B cell (primary cell): ENCODE measurements at regions of chr2 and their contacts with region 1.

Region 1: DNA sequence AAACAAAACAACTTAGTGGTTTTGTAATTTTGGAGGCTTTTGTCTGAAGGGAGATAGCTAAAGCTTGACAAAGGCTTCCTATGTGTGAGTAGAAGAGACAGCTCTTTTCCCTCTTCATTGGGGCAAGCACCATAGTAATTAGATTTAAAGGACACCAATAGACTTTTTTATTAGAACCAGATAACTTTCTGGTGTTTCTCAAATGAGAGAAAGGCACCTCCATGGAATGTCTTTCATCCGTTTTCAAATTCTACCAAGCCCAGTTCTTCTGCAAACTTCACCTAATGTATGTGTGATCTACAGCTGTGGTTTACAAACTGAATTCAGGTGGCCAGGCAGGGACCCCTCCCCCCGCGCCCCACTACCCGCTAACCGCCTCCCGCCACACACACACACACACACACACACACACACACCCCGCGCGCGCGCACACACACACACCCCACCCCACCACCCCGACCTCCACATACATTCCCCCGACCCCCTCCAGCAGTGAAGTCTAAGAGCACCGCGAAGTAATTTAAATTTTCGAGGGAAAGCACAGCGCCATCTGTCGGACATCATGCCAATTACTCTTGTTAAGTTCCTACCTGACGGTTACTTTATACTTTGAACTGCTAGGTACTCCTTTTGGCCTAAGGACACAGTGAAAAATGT is 31.6 kb upstream of the PPP1R1C start:
- DNase-seq: peak; percentile 71
- ATAC-seq: peak; percentile 71
- H3K4me3 ChIP-seq: peak overlapping the region in 3 of 5 experiments; percentile 3 to 40 (median 10)
- H3K4me3 Mint-ChIP-seq: peak overlapping the region; percentile 66
- H3K27ac ChIP-seq: no peak overlapping the region
- H3K27ac Mint-ChIP-seq: no peak overlapping the region
- H3K4me1 ChIP-seq: peaks cover 0 to 3% of the 10 kb centered on the region in 2 donors
- H3K4me1 Mint-ChIP-seq: peaks cover 7% of the 10 kb centered on the region
- H3K27me3 ChIP-seq: no peaks in the 10 kb centered on the region
- H3K27me3 Mint-ChIP-seq: peaks cover 20% of the 10 kb centered on the region
- CTCF ChIP-seq: peak; percentile 66

Region 2: DNA sequence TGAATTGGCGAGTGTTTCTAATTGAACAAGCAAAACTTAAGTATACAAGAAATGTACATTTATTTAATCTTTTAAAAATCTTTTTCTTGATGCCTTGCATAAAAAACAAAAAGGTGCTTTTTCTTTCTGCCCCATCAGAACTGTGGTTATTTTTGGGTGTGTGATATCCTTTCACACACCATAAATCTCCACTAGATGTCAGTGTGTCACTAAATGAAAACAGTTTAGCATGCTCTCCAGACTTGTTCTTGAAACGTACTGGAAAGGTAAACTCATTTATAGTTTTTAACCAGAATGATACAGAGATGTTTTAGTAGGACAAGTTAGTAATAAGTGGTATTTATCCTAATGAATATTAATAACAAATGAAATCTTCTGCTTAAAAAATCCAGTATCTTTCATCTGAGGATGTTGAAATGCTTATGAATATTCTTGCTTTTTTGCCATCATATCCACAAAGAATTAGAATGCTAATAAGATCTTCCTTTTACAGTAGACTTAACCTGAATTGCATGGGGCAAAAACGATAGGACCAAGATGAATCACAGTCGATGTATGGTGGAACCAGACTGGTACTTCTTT is 876.8 kb before region 1 on chr2:
- CTCF ChIA-PET with region 1: no interaction called
- POLR2A ChIA-PET with region 1: no interaction called
- intact Hi-C with region 1: loop called (anchors 5 kb)
- DNase-seq: peak; percentile 70
- ATAC-seq: peak; percentile 65
- H3K4me3 ChIP-seq: no peak overlapping the region
- H3K4me3 Mint-ChIP-seq: no peak overlapping the region
- H3K27ac ChIP-seq: no peak overlapping the region
- H3K27ac Mint-ChIP-seq: no peak overlapping the region
- H3K4me1 ChIP-seq: no peaks in the 10 kb centered on the region
- H3K4me1 Mint-ChIP-seq: peaks cover 5% of the 10 kb centered on the region
- H3K27me3 ChIP-seq: no peaks in the 10 kb centered on the region
- H3K27me3 Mint-ChIP-seq: no peaks in the 10 kb centered on the region
- CTCF ChIP-seq: peak; percentile 85

Region 3: GRCh38 chr2:181742922-181743722 is 210.9 kb before region 1 on chr2:
- CTCF ChIA-PET with region 1: interaction called, 14 read pairs
- POLR2A ChIA-PET with region 1: no interaction called
- intact Hi-C with region 1: loop called (anchors 1 kb)
- DNase-seq: peak; percentile 49
- ATAC-seq: no peak
- H3K4me3 ChIP-seq: no peak overlapping the region
- H3K4me3 Mint-ChIP-seq: no peak overlapping the region
- H3K27ac ChIP-seq: no peak overlapping the region
- H3K27ac Mint-ChIP-seq: no peak overlapping the region
- H3K4me1 ChIP-seq: no peaks in the 10 kb centered on the region
- H3K4me1 Mint-ChIP-seq: no peaks in the 10 kb centered on the region
- H3K27me3 ChIP-seq: no peaks in the 10 kb centered on the region
- H3K27me3 Mint-ChIP-seq: peaks cover 4% of the 10 kb centered on the region
- CTCF ChIP-seq: peak; percentile 74

Region 4: DNA sequence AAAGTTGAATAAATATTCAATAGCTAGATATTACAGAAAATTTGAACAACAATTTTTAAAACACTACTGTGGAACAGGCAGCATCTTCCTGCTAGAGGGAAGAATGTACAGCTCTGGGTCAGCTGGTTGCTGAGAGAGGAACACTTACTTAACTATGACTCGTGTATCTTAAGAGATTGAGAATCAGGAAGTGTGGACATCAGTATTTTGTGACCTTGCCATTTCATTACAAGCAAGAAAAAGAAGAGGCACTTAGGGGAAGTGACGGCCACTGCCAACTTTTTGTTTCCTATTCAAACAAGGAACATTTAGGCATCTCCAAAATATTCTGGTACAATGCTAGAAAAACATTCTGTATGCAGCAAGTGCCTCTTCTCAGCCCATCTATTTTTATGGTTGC is 16.5 kb before region 1 on chr2:
- CTCF ChIA-PET with region 1: interaction called, 11 read pairs
- POLR2A ChIA-PET with region 1: no interaction called
- intact Hi-C with region 1: no loop called
- DNase-seq: no peak
- ATAC-seq: no peak
- H3K4me3 ChIP-seq: no peak overlapping the region
- H3K4me3 Mint-ChIP-seq: no peak overlapping the region
- H3K27ac ChIP-seq: no peak overlapping the region
- H3K27ac Mint-ChIP-seq: no peak overlapping the region
- H3K4me1 ChIP-seq: no peaks in the 10 kb centered on the region
- H3K4me1 Mint-ChIP-seq: no peaks in the 10 kb centered on the region
- H3K27me3 ChIP-seq: peaks cover 0 to 3% (median 1%) of the 10 kb centered on the region in 4 experiments
- H3K27me3 Mint-ChIP-seq: peaks cover 4% of the 10 kb centered on the region
- CTCF ChIP-seq: no peak